Right ventricle myocardium superior (tissue), 1 donor: ENCODE measurements at regions of chr14 and their contacts with region 1.

Region 1: GRCh38 chr14:102516531-102517415 is 7.2 kb upstream of the ANKRD9 start:
- DNase-seq: peak; percentile 79
- ATAC-seq: peak; percentile 88

Region 2: GRCh38 chr14:102437997-102438915 is 78.5 kb before region 1 on chr14:
- intact Hi-C with region 1: loop called (anchors 1 kb)
- DNase-seq: peak; percentile 91
- ATAC-seq: peak; percentile 97